H1 (cell line): ENCODE measurements at regions of chr6 and their contacts with region 1.

Region 1: DNA sequence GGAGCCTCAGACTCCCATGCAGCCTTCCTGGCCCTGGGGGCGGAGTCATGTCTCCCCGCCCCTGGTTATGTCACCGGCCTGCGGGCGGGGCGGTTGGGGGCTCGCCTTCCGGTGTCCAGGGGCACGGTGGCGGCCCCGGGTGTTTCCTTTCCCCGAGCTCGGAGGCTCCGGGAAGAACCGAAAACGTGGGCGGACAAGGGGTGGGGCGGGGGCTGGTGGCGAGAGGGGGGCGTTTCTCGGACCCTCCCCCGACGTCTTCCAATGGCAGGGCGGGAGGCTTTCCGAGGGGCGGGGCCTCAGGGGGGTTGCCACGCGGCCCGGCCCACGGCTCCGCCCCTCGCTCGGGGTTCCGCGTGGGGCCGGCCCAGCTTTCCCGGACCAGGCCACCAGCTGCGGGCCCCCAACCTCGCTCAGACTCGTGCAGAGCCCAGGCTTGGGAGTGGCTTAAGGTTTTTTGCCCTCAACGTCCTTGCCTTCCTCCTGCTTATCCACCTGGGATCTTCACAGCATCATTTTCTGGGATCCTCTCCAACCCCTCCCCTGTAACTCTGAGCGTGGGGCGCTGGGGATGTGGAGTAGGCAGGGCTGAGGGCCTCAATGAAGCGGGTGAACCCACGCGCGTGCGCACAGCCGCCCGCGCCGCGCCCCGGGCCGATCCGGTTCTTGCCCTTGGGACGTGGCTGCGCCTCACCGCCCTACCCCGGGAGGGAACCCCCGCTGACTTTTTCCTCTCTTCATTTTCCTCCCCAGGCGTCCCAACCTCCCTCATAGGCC is 2.1 kb upstream of the NRN1 start:
- DNase-seq: peak in 1 of 2 experiments; percentile 84
- H3K4me3 ChIP-seq: peak overlapping the region; percentile 60 to 74 (median 70)
- H3K27ac ChIP-seq: no peak overlapping the region
- H3K4me1 ChIP-seq: peaks cover 10 to 27% (median 15%) of the 10 kb centered on the region in 4 experiments
- H3K27me3 ChIP-seq: peaks cover 23 to 57% (median 49%) of the 10 kb centered on the region in 4 experiments
- CTCF ChIP-seq: no peak
- EP300 ChIP-seq: no peak
- POLR2A ChIP-seq: no peak
- RAD21 ChIP-seq: no peak

Region 2: GRCh38 chr6:5995949-5996713 is 12.7 kb before region 1 on chr6:
- CTCF ChIA-PET with region 1: interaction called, 27 read pairs
- POLR2A ChIA-PET with region 1: interaction called, 10 read pairs
- DNase-seq: peak in 1 of 2 experiments; percentile 85
- H3K4me3 ChIP-seq: peak overlapping the region; percentile 38 to 60 (median 50); a peak in 7 of 8 replicates
- H3K27ac ChIP-seq: no peak overlapping the region
- H3K4me1 ChIP-seq: peaks cover 4 to 25% (median 17%) of the 10 kb centered on the region in 4 experiments
- H3K27me3 ChIP-seq: peaks cover 74 to 99% (median 96%) of the 10 kb centered on the region in 4 experiments
- CTCF ChIP-seq: peak in 2 of 3 experiments; percentile 26 to 59; a peak in 2 of 4 replicates
- EP300 ChIP-seq: no peak
- POLR2A ChIP-seq: no peak
- RAD21 ChIP-seq: peak; percentile 27 to 28; a peak in 1 of 4 replicates